T-cell (primary cell): ENCODE measurements at regions of chr11 and their contacts with region 1.

Region 1: GRCh38 chr11:117946842-117947526 is 17.8 kb upstream of the TMPRSS13 start:
- DNase-seq: peak; percentile 33 to 88 (median 74)
- ATAC-seq: peak in 1 of 4 experiments; percentile 28
- H3K4me3 ChIP-seq: no peak overlapping the region
- H3K4me3 Mint-ChIP-seq: peak overlapping the region in 1 of 3 donors; percentile 77
- H3K27ac ChIP-seq: peak overlapping the region; percentile 17
- H3K27ac Mint-ChIP-seq: peak overlapping the region; percentile 67 to 85
- H3K4me1 ChIP-seq: peaks cover 47 to 58% of the 10 kb centered on the region in 2 experiments
- H3K4me1 Mint-ChIP-seq: peaks cover 63 to 78% (median 63%) of the 10 kb centered on the region in 3 donors
- H3K27me3 ChIP-seq: no peaks in the 10 kb centered on the region
- H3K27me3 Mint-ChIP-seq: no peaks in the 10 kb centered on the region

Region 2: DNA sequence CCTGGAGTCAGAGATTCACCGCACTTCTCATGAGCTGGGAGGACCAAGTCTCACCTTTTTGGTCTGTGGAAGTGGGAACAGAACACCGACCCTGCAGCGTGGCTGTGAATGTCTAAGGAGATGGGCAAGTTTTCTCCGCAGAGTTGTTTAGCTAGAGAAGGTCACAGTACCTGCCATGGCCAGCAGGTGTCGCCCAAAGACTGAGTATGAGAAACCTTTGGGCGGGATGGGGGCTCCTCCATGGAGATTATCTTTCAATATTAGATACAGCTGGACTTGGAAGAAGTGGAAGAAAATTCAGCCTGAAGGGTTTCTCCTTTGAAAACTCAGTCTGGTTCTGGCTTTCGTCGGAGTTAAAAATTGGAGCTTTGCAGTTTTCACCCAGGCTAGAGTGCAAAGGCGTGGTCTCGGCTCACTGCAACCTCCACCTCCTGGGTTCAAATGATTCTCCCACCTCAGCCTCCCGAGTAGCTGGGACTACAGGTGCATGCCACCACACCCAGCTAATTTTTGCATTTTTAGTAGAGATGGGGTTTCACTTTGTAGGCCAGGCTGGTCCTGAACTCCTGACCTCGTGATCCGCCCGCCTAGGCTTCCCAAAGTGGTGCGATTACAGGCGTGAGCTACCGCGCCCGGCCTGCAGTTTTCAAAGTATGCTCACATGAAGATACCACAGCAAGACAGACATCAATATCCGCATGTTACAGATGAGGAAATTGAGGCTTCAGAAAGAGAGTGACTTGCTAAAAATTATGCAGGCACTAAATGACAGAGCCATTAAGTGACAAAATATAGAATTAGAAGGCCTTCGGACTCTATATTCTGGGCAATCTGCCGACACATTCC is 139.3 kb before region 1 on chr11:
- CTCF ChIA-PET with region 1: interaction called, 8 to 21 read pairs
- POLR2A ChIA-PET with region 1: no interaction called
- DNase-seq: peak in 33 of 35 experiments; percentile 33 to 87 (median 68)
- ATAC-seq: peak; percentile 53 to 81 (median 70)
- H3K4me3 ChIP-seq: no peak overlapping the region
- H3K4me3 Mint-ChIP-seq: no peak overlapping the region
- H3K27ac ChIP-seq: no peak overlapping the region
- H3K27ac Mint-ChIP-seq: no peak overlapping the region
- H3K4me1 ChIP-seq: peaks cover 0 to 15% of the 10 kb centered on the region in 2 experiments
- H3K4me1 Mint-ChIP-seq: peaks cover 3 to 12% (median 8%) of the 10 kb centered on the region in 3 donors
- H3K27me3 ChIP-seq: peaks cover 0 to 11% of the 10 kb centered on the region in 2 experiments
- H3K27me3 Mint-ChIP-seq: no peaks in the 10 kb centered on the region

Region 3: DNA sequence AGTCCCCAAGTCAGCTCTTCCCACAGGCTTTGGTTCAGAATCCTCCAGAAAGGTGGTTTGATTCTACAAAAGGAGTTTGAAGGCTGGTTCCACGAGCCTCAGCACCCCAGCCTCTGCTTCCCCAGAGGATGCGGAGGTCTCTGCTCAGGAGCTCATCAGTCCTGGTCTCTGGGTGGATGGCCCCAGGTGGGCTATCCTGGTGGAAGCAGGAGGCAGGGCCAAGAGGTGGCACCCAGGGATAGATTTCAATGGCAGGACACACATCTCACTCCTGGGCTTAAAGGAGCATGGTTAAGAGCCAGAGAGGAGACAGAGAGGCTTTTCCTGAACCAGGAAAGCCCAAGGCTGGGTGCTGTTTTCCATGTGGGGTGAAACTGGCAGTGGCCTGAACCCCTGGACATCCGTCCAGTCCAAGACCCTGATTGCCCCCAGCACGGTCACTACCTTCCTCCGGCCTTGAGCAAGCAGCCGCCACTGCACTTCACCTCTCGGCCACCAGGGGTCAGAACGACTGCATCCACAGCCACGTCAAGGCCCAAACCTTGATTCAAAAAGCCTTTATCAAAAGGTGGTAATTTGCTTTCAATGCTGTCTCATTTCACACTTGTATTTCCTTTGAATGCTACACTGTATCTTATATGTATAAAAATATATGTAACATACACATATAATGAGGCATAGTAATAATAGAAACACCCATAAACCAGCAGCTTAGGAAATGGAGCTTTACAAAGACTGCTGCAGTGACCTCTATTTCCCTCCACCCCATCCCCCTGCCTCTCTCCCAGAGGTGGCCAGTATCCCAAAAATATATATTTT is 103.1 kb before region 1 on chr11:
- CTCF ChIA-PET with region 1: interaction called, 26 to 29 read pairs
- POLR2A ChIA-PET with region 1: no interaction called
- DNase-seq: peak; percentile 37 to 90 (median 75)
- ATAC-seq: peak; percentile 78 to 83 (median 82)
- H3K4me3 ChIP-seq: no peak overlapping the region
- H3K4me3 Mint-ChIP-seq: no peak overlapping the region
- H3K27ac ChIP-seq: no peak overlapping the region
- H3K27ac Mint-ChIP-seq: no peak overlapping the region
- H3K4me1 ChIP-seq: peaks cover 0 to 8% of the 10 kb centered on the region in 2 experiments
- H3K4me1 Mint-ChIP-seq: peaks cover 0 to 6% (median 0%) of the 10 kb centered on the region in 3 donors
- H3K27me3 ChIP-seq: peaks cover 0 to 6% of the 10 kb centered on the region in 2 experiments
- H3K27me3 Mint-ChIP-seq: peaks cover 0 to 2% of the 10 kb centered on the region in 2 donors

Region 4: DNA sequence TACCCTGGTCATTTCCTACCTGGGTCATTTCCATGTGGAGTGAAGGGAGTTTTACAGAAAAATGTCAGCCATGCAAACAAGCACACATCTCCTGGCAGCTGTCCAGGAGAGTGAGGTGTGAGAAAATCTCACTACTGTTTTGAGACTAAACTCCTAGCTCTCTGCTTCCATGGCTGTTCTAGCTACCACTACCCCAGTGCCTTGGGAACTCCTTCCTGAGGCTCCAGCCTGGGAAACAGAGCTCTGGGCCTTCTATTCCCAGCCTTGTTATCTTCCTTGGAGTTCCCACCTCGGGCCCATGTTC is 15.0 kb before region 1 on chr11:
- CTCF ChIA-PET with region 1: interaction called in 1 of 2 experiments, 13 read pairs
- POLR2A ChIA-PET with region 1: interaction called in 1 of 2 experiments, 3 read pairs
- DNase-seq: peak in 16 of 35 experiments; percentile 10 to 61 (median 25)
- ATAC-seq: no peak
- H3K4me3 ChIP-seq: no peak overlapping the region
- H3K4me3 Mint-ChIP-seq: peak overlapping the region in 1 of 3 donors; percentile 42
- H3K27ac ChIP-seq: no peak overlapping the region
- H3K27ac Mint-ChIP-seq: peak overlapping the region; percentile 22 to 28
- H3K4me1 ChIP-seq: peaks cover 24 to 49% of the 10 kb centered on the region in 2 experiments
- H3K4me1 Mint-ChIP-seq: peaks cover 52 to 60% (median 59%) of the 10 kb centered on the region in 3 donors
- H3K27me3 ChIP-seq: no peaks in the 10 kb centered on the region
- H3K27me3 Mint-ChIP-seq: no peaks in the 10 kb centered on the region

Region 5: GRCh38 chr11:117985953-117986887 is 39.2 kb after region 1 on chr11 and contains the start of gene IL10RA:
- CTCF ChIA-PET with region 1: interaction called, 5 to 52 read pairs
- POLR2A ChIA-PET with region 1: interaction called, 10 to 16 read pairs
- DNase-seq: peak; percentile 51 to 90 (median 73)
- ATAC-seq: peak; percentile 83 to 88 (median 86)
- H3K4me3 ChIP-seq: peak within 1 kb of the TSS; percentile 89 to 96
- H3K4me3 Mint-ChIP-seq: peak within 1 kb of the TSS; percentile 91 to 95 (median 93)
- H3K27ac ChIP-seq: peak within 1 kb of the TSS; percentile 89
- H3K27ac Mint-ChIP-seq: peak within 1 kb of the TSS; percentile 94 to 96
- H3K4me1 ChIP-seq: peaks cover 23 to 66% of the 10 kb centered on the region in 2 experiments
- H3K4me1 Mint-ChIP-seq: peaks cover 75 to 83% (median 76%) of the 10 kb centered on the region in 3 donors
- H3K27me3 ChIP-seq: no peaks in the 10 kb centered on the region
- H3K27me3 Mint-ChIP-seq: no peaks in the 10 kb centered on the region
- total RNA-seq, gene IL10RA: 195 to 450 (median 375) TPM

Region 6: GRCh38 chr11:118046051-118046963 is 99.3 kb after region 1 on chr11:
- CTCF ChIA-PET with region 1: interaction called, 5 to 138 read pairs
- POLR2A ChIA-PET with region 1: interaction called in 1 of 2 experiments, 3 read pairs
- DNase-seq: peak in 33 of 35 experiments; percentile 24 to 76 (median 52)
- ATAC-seq: peak; percentile 70 to 92 (median 82)
- H3K4me3 ChIP-seq: no peak overlapping the region
- H3K4me3 Mint-ChIP-seq: peak overlapping the region in 2 of 3 donors; percentile 23 to 63
- H3K27ac ChIP-seq: peak overlapping the region; percentile 89
- H3K27ac Mint-ChIP-seq: peak overlapping the region; percentile 87 to 92
- H3K4me1 ChIP-seq: peaks cover 49 to 75% of the 10 kb centered on the region in 2 experiments
- H3K4me1 Mint-ChIP-seq: peaks cover 90 to 94% (median 93%) of the 10 kb centered on the region in 3 donors
- H3K27me3 ChIP-seq: no peaks in the 10 kb centered on the region
- H3K27me3 Mint-ChIP-seq: no peaks in the 10 kb centered on the region

Region 7: DNA sequence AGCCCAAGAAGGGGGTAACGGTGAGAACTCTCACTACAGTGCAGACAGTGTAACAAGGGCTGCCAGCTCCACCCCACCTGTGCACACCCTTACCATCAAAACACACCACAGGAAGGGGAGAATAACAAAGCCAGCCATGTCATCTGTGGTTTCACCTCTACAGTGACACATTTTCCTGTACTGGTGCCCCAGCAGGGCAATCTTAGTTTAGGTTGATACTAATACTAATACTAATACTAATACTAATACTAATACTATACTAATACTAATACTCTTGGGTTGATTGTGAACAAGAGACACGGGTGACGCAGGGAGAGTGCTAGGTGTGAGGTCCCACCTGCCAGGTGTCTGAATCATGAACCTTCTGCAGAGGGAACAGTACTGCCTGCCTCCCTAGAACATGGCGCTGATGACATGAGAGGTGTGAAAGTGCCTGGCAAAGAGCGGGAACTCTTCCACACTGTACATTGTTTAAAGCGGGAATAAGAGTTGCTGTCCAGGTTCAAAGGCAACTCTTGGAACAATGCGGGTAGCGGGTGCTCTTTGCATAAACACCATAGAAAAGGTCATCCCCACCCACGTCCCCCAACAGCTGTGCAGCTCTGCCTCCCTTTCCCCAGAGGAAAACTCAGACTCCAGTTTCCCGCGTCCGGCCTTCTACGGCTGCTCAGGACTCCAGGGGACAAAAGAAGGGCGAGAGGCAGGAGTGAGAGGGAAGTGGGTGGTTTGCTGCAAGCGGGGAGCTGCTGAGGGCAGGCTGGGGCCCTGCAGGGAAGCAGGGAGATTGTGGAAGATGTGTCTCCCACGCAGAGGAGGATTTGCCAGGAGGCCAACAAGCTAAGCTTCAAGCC is 104.9 kb after region 1 on chr11:
- CTCF ChIA-PET with region 1: interaction called, 9 to 138 read pairs
- POLR2A ChIA-PET with region 1: interaction called in 1 of 2 experiments, 3 read pairs
- DNase-seq: peak; percentile 57 to 90 (median 78)
- ATAC-seq: peak; percentile 96 to 97 (median 97)
- H3K4me3 ChIP-seq: no peak overlapping the region
- H3K4me3 Mint-ChIP-seq: peak overlapping the region; percentile 9 to 63 (median 59)
- H3K27ac ChIP-seq: peak overlapping the region; percentile 76
- H3K27ac Mint-ChIP-seq: peak overlapping the region; percentile 97 to 99
- H3K4me1 ChIP-seq: peaks cover 36 to 67% of the 10 kb centered on the region in 2 experiments
- H3K4me1 Mint-ChIP-seq: peaks cover 60 to 62% (median 61%) of the 10 kb centered on the region in 3 donors
- H3K27me3 ChIP-seq: no peaks in the 10 kb centered on the region
- H3K27me3 Mint-ChIP-seq: peaks cover 0 to 1% of the 10 kb centered on the region in 2 donors